ENCODE measurements at regions of chr16 and their contacts with region 1.

Region 1: DNA sequence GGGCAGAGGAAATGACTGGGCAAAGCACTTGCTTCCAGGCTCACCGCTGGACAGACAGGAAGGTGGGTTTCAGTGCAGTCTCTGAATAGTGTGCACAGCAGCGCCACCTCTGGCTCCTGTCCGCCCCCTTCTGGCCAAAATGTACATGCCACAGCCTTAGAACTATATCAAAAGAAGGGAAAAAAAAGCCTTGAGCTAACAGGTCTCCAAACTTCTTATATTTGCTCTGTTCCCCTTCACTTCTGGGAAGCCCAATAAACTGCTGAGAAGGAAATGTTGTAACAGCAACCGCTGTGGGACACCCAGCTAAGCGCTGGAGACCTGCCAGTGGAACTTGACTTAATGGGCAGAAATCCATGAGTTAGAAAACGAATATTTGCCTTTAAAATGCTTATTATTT is 17.5 kb downstream of the COG7 start:
- DNase-seq: peak; percentile 56 to 71 (median 56)
- H3K4me3 ChIP-seq: no peak overlapping the region
- H3K4me3 Mint-ChIP-seq: no peak overlapping the region
- H3K27ac ChIP-seq: no peak overlapping the region
- H3K27ac Mint-ChIP-seq: peak overlapping the region in 2 of 7 donors; percentile 23 to 64
- H3K4me1 ChIP-seq: peaks cover 4% of the 10 kb centered on the region
- H3K4me1 Mint-ChIP-seq: peaks cover 0 to 13% (median 6%) of the 10 kb centered on the region in 4 donors
- H3K27me3 ChIP-seq: no peaks in the 10 kb centered on the region
- H3K27me3 Mint-ChIP-seq: no peaks in the 10 kb centered on the region

Region 2: GRCh38 chr16:21554795-21555585 is 1880.5 kb before region 1 on chr16:
- CTCF ChIA-PET with region 1: interaction called, 3 read pairs
- POLR2A ChIA-PET with region 1: no interaction called
- intact Hi-C with region 1: loop called (anchors 10 kb)
- DNase-seq: peak; percentile 84 to 88 (median 87)
- H3K4me3 ChIP-seq: no peak overlapping the region
- H3K4me3 Mint-ChIP-seq: peak overlapping the region; percentile 53 to 87 (median 75)
- H3K27ac ChIP-seq: no peak overlapping the region
- H3K27ac Mint-ChIP-seq: peak overlapping the region in 6 of 7 donors; percentile 9 to 75 (median 51)
- H3K4me1 ChIP-seq: peaks cover 9% of the 10 kb centered on the region
- H3K4me1 Mint-ChIP-seq: peaks cover 3 to 12% (median 6%) of the 10 kb centered on the region in 4 donors
- H3K27me3 ChIP-seq: no peaks in the 10 kb centered on the region
- H3K27me3 Mint-ChIP-seq: peaks cover 0 to 5% of the 10 kb centered on the region in 2 donors

Region 3: GRCh38 chr16:22948603-22949368 is 486.7 kb before region 1 on chr16:
- CTCF ChIA-PET with region 1: no interaction called
- POLR2A ChIA-PET with region 1: no interaction called
- intact Hi-C with region 1: no loop called
- DNase-seq: peak; percentile 13 to 58 (median 17)
- H3K4me3 ChIP-seq: no peak overlapping the region
- H3K4me3 Mint-ChIP-seq: peak overlapping the region in 4 of 8 donors; percentile 34 to 59 (median 40)
- H3K27ac ChIP-seq: no peak overlapping the region
- H3K27ac Mint-ChIP-seq: no peak overlapping the region
- H3K4me1 ChIP-seq: peaks cover 5% of the 10 kb centered on the region
- H3K4me1 Mint-ChIP-seq: peaks cover 0 to 10% (median 5%) of the 10 kb centered on the region in 4 donors
- H3K27me3 ChIP-seq: no peaks in the 10 kb centered on the region
- H3K27me3 Mint-ChIP-seq: peaks cover 27 to 34% of the 10 kb centered on the region in 2 donors

Region 4: GRCh38 chr16:23013481-23013880 is 422.0 kb before region 1 on chr16:
- CTCF ChIA-PET with region 1: no interaction called
- POLR2A ChIA-PET with region 1: no interaction called
- intact Hi-C with region 1: no loop called
- DNase-seq: no peak
- H3K4me3 ChIP-seq: no peak overlapping the region
- H3K4me3 Mint-ChIP-seq: no peak overlapping the region
- H3K27ac ChIP-seq: no peak overlapping the region
- H3K27ac Mint-ChIP-seq: no peak overlapping the region
- H3K4me1 ChIP-seq: no peaks in the 10 kb centered on the region
- H3K4me1 Mint-ChIP-seq: no peaks in the 10 kb centered on the region
- H3K27me3 ChIP-seq: no peaks in the 10 kb centered on the region
- H3K27me3 Mint-ChIP-seq: peaks cover 11 to 18% of the 10 kb centered on the region in 2 donors

Region 5: GRCh38 chr16:23182460-23183309 is 252.8 kb before region 1 on chr16 and contains the start of gene SCNN1G:
- CTCF ChIA-PET with region 1: interaction called, 12 read pairs
- POLR2A ChIA-PET with region 1: no interaction called
- intact Hi-C with region 1: no loop called
- DNase-seq: peak; percentile 61 to 77 (median 70)
- H3K4me3 ChIP-seq: no peak within 1 kb of the TSS
- H3K4me3 Mint-ChIP-seq: peak within 1 kb of the TSS; percentile 4 to 83 (median 62)
- H3K27ac ChIP-seq: no peak within 1 kb of the TSS
- H3K27ac Mint-ChIP-seq: peak within 1 kb of the TSS in 1 of 7 donors; percentile 3
- H3K4me1 ChIP-seq: peaks cover 14% of the 10 kb centered on the region
- H3K4me1 Mint-ChIP-seq: peaks cover 5 to 20% (median 8%) of the 10 kb centered on the region in 4 donors
- H3K27me3 ChIP-seq: peaks cover 9% of the 10 kb centered on the region
- H3K27me3 Mint-ChIP-seq: peaks cover 42 to 46% of the 10 kb centered on the region in 2 donors
- total RNA-seq, gene SCNN1G: not detected

Region 6: DNA sequence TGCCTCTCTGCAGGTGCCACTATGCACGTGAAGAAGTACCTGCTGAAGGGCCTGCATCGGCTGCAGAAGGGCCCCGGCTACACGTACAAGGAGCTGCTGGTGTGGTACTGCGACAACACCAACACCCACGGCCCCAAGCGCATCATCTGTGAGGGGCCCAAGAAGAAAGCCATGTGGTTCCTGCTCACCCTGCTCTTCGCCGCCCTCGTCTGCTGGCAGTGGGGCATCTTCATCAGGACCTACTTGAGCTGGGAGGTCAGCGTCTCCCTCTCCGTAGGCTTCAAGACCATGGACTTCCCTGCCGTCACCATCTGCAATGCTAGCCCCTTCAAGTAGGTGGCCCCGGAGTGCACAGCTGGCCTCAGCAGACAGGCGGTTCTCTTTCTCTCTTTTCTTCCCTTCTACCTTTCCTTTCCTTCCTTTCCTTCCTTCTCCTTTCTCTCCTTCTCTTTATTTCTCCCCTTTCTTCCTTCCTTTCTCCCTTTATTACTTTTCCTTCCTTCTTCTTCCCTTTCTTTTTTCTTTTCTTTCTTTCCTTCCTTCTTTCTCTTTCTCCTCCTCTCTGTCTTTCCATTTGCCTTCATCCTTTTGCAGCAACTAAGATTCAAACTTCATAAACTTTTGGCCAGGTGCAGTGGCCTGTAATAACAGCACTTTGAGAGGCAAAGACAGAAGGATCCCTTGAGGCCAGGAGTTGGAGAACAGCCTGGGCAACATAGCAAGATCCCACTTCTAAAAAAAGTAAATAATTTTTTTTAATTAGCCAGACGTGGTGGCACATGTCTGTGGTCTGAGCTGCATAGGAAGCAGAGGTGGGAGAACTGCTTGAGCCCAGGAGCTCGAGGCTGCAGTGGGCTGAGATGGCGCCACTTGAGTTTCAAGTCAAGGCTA is 86.7 kb before region 1 on chr16:
- CTCF ChIA-PET with region 1: no interaction called
- POLR2A ChIA-PET with region 1: no interaction called
- intact Hi-C with region 1: no loop called
- DNase-seq: no peak
- H3K4me3 ChIP-seq: no peak overlapping the region
- H3K4me3 Mint-ChIP-seq: no peak overlapping the region
- H3K27ac ChIP-seq: no peak overlapping the region
- H3K27ac Mint-ChIP-seq: peak overlapping the region in 1 of 7 donors; percentile 48
- H3K4me1 ChIP-seq: no peaks in the 10 kb centered on the region
- H3K4me1 Mint-ChIP-seq: no peaks in the 10 kb centered on the region
- H3K27me3 ChIP-seq: no peaks in the 10 kb centered on the region
- H3K27me3 Mint-ChIP-seq: peaks cover 15 to 16% of the 10 kb centered on the region in 2 donors

Region 7: DNA sequence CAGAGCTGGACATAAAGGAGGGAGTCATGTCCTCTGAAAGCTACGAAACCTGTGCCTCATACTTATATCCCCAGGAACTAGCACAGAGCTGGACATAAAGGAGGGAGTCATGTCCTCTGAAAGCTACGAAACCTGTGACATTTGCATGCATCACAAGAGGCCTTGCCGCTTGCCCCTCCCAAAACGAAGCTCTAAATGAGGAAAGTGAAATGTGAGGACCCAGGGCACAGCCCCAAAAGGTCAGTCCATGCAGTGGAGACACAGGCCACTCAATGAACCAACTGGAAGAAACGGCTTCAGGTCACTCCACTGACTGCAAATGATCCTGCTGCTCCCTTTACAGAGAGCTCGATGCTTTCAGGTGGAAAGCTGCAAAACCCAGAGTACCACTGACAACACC is 20.8 kb before region 1 on chr16:
- CTCF ChIA-PET with region 1: interaction called, 42 read pairs
- POLR2A ChIA-PET with region 1: no interaction called
- intact Hi-C with region 1: no loop called
- DNase-seq: no peak
- H3K4me3 ChIP-seq: no peak overlapping the region
- H3K4me3 Mint-ChIP-seq: no peak overlapping the region
- H3K27ac ChIP-seq: no peak overlapping the region
- H3K27ac Mint-ChIP-seq: no peak overlapping the region
- H3K4me1 ChIP-seq: no peaks in the 10 kb centered on the region
- H3K4me1 Mint-ChIP-seq: no peaks in the 10 kb centered on the region
- H3K27me3 ChIP-seq: no peaks in the 10 kb centered on the region
- H3K27me3 Mint-ChIP-seq: no peaks in the 10 kb centered on the region

Region 8: GRCh38 chr16:23452572-23453337 is 17.3 kb after region 1 on chr16 and contains the start of gene COG7:
- CTCF ChIA-PET with region 1: interaction called, 56 read pairs
- POLR2A ChIA-PET with region 1: interaction called, 3 read pairs
- intact Hi-C with region 1: no loop called
- DNase-seq: peak; percentile 82 to 88 (median 83)
- H3K4me3 ChIP-seq: peak within 1 kb of the TSS; percentile 83 to 95
- H3K4me3 Mint-ChIP-seq: peak within 1 kb of the TSS; percentile 92 to 99 (median 98)
- H3K27ac ChIP-seq: peak within 1 kb of the TSS; percentile 64
- H3K27ac Mint-ChIP-seq: peak within 1 kb of the TSS; percentile 90 to 98 (median 95)
- H3K4me1 ChIP-seq: peaks cover 21% of the 10 kb centered on the region
- H3K4me1 Mint-ChIP-seq: peaks cover 24 to 53% (median 36%) of the 10 kb centered on the region in 4 donors
- H3K27me3 ChIP-seq: no peaks in the 10 kb centered on the region
- H3K27me3 Mint-ChIP-seq: no peaks in the 10 kb centered on the region
- total RNA-seq, gene COG7: 19.7 to 24.7 TPM

Region 9: GRCh38 chr16:23510164-23510914 is 74.8 kb after region 1 on chr16 and contains the start of gene GGA2:
- CTCF ChIA-PET with region 1: interaction called, 10 read pairs
- POLR2A ChIA-PET with region 1: interaction called, 3 read pairs
- intact Hi-C with region 1: no loop called
- DNase-seq: peak; percentile 68 to 78 (median 73)
- H3K4me3 ChIP-seq: peak within 1 kb of the TSS; percentile 63 to 75
- H3K4me3 Mint-ChIP-seq: peak within 1 kb of the TSS; percentile 90 to 97 (median 94)
- H3K27ac ChIP-seq: peak within 1 kb of the TSS; percentile 61
- H3K27ac Mint-ChIP-seq: peak within 1 kb of the TSS; percentile 71 to 95 (median 90)
- H3K4me1 ChIP-seq: peaks cover 51% of the 10 kb centered on the region
- H3K4me1 Mint-ChIP-seq: peaks cover 44 to 78% (median 59%) of the 10 kb centered on the region in 4 donors
- H3K27me3 ChIP-seq: no peaks in the 10 kb centered on the region
- H3K27me3 Mint-ChIP-seq: no peaks in the 10 kb centered on the region
- total RNA-seq, gene GGA2: 114 to 118 TPM

Measured in CD4-positive, alpha-beta memory T cell (primary cell).